ENCODE measurements at regions of chr2 and their contacts with region 1.

Region 1: DNA sequence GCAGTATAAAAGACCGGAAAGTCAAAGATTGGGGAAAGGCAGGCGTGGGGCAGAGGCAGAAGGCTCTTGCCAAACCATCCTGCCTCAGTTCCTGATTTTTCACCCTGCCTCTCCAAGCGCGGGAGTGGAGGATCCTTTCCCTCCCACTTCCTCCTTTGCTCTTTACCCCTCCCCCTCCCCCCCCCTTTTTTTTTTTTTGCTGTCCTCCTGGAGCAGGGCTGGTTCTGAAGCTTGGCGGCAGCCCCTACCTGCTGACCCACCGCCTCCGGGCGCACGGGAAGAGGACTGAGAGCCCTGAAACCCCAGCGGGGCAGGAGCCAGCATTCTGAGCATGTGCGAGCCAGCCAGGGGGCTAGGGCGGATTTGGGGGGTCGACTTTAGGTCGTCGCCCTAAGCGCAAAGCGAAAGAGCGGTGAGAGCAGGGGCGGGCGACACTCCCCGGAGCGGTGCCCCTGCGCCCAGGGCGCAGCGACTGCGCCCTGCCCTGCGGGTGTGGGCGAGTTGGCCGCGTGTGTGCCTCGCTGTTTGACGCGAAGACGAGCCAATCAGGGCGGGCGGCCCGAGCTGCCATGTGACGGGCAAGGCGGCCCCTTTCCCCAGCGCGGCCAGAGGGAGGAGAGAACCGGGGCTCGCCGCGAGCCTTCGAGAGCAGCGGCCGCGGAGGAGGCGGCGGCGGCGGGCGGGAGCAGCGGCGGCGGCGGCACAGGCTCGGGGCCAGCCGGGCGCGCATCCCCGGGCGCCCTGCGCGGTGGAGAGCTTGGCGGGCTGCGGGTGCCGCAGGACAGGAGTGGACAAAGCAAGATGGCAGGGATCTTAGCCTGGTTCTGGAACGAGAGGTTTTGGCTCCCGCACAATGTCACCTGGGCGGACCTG is at the start of gene CERS6:
- DNase-seq: peak; percentile 96 to 98 (median 97)
- ATAC-seq: peak; percentile 91 to 99 (median 98)
- H3K4me3 ChIP-seq: peak within 1 kb of the TSS; percentile 67 to 95 (median 86)
- H3K27ac ChIP-seq: peak within 1 kb of the TSS; percentile 80 to 97 (median 88)
- H3K4me1 ChIP-seq: peaks cover 0 to 38% (median 11%) of the 10 kb centered on the region in 12 donors
- H3K27me3 ChIP-seq: no peaks in the 10 kb centered on the region
- CTCF ChIP-seq: peak in 1 of 12 donors; percentile 10
- POLR2A ChIP-seq: peak; percentile 8 to 95
- total RNA-seq, gene CERS6: 48.1 to 78.0 (median 67.1) TPM

Region 2: GRCh38 chr2:168518555-168519066 is 62.7 kb after region 1 on chr2:
- intact Hi-C with region 1: loop called in 3 of 10 experiments (anchors 5 to 10 kb)
- DNase-seq: peak in 3 of 5 donors; percentile 29 to 51 (median 39)
- ATAC-seq: peak; percentile 80 to 94 (median 90)
- H3K4me3 ChIP-seq: peak overlapping the region in 1 of 12 donors; percentile 9
- H3K27ac ChIP-seq: peak overlapping the region in 11 of 12 donors; percentile 21 to 78 (median 52)
- H3K4me1 ChIP-seq: peaks cover 0 to 66% (median 37%) of the 10 kb centered on the region in 12 donors
- H3K27me3 ChIP-seq: no peaks in the 10 kb centered on the region
- CTCF ChIP-seq: no peak
- POLR2A ChIP-seq: no peak

Region 3: DNA sequence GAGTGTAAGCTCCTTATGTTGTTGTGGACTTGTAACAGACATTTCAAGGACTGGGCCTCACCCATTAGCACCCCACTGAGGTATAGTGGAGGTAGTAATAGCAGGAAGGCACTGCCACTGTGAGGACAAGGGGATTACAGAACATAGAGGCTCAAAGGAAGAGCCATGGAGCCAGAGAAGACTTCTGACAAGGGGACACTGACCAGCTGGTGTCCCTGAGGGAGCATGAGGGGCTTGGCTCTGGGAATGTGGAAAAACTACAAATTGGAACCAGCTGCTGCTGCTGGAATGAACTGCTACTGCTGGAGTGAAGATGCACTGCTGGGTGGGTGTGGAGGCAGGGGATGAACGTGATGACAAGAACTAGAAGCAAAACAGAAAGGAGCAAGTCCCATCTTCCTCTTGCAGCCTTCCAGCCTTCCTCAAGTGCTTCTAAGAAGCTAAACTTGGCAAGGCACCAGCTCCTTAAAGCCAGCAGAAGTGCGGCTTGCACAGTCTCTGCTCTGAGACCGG is 179.2 kb after region 1 on chr2:
- intact Hi-C with region 1: loop called in 4 of 10 experiments (anchors 2 to 10 kb)
- DNase-seq: peak; percentile 60 to 84 (median 72)
- ATAC-seq: peak; percentile 22 to 65 (median 38)
- H3K4me3 ChIP-seq: no peak overlapping the region
- H3K27ac ChIP-seq: peak overlapping the region in 9 of 12 donors; percentile 16 to 92 (median 82)
- H3K4me1 ChIP-seq: peaks cover 0 to 71% (median 45%) of the 10 kb centered on the region in 12 donors
- H3K27me3 ChIP-seq: no peaks in the 10 kb centered on the region
- CTCF ChIP-seq: no peak
- POLR2A ChIP-seq: no peak

Region 4: DNA sequence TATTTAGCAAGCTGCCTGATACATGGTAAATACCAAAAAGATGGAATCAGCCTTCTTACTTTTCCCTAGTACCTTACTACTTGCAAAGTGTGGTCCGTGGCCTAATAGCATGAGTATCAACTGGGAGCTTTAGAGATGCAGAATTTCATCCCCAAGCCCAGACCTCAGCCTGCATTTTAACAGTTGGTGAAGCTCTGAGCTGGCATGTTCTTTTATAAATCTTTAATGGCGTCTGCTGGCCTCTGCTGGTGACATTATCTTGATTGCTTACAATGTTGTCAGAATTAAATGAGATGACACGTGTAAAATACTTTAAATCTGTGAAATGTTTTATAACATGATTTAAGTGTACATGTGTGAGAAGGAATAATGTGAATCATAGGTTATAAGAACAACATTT is 231.4 kb after region 1 on chr2:
- intact Hi-C with region 1: loop called in 3 of 10 experiments (anchors 5 to 10 kb)
- DNase-seq: no peak
- ATAC-seq: peak in 3 of 4 donors; percentile 36 to 53 (median 50)
- H3K4me3 ChIP-seq: no peak overlapping the region
- H3K27ac ChIP-seq: no peak overlapping the region
- H3K4me1 ChIP-seq: peaks cover 0 to 28% (median 7%) of the 10 kb centered on the region in 12 donors
- H3K27me3 ChIP-seq: no peaks in the 10 kb centered on the region
- CTCF ChIP-seq: peak in 10 of 12 donors; percentile 6 to 55 (median 38)
- POLR2A ChIP-seq: no peak

Region 5: GRCh38 chr2:168758970-168759820 is 303.3 kb after region 1 on chr2:
- intact Hi-C with region 1: loop called in 2 of 10 experiments (anchors 5 to 10 kb)
- DNase-seq: peak in 1 of 5 donors; percentile 21
- ATAC-seq: peak; percentile 52 to 83 (median 74)
- H3K4me3 ChIP-seq: no peak overlapping the region
- H3K27ac ChIP-seq: no peak overlapping the region
- H3K4me1 ChIP-seq: peaks cover 0 to 35% (median 14%) of the 10 kb centered on the region in 12 donors
- H3K27me3 ChIP-seq: no peaks in the 10 kb centered on the region
- CTCF ChIP-seq: peak; percentile 42 to 73 (median 61)
- POLR2A ChIP-seq: no peak

Region 6: DNA sequence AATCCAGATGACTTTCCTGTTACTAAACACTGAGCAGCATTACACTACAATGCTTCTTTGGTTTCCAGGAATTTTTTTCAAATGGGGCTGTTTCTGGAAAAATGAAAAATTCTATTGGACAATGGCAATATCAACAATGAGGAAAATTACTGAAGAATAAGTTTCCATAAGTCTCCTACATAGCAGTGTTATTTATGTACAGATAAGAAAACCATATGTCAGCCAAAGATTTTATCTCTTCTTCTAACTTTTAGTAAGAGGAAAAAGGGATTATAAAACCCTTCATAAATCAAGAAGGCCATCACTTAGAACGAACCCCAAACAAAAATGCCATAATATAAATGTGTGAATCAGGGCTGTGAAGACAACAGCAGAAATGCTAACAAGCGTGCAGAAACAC is 314.9 kb after region 1 on chr2:
- intact Hi-C with region 1: no loop called
- DNase-seq: no peak
- ATAC-seq: no peak
- H3K4me3 ChIP-seq: no peak overlapping the region
- H3K27ac ChIP-seq: no peak overlapping the region
- H3K4me1 ChIP-seq: peaks cover 0 to 26% (median 5%) of the 10 kb centered on the region in 12 donors
- H3K27me3 ChIP-seq: no peaks in the 10 kb centered on the region
- CTCF ChIP-seq: no peak
- POLR2A ChIP-seq: no peak